ENCODE measurements at regions of chr6 and their contacts with region 1.

Region 1: GRCh38 chr6:166097915-166098522 is 69.6 kb downstream of the TBXT start:
- DNase-seq: peak; percentile 67
- CTCF ChIP-seq: peak; percentile 83

Region 2: DNA sequence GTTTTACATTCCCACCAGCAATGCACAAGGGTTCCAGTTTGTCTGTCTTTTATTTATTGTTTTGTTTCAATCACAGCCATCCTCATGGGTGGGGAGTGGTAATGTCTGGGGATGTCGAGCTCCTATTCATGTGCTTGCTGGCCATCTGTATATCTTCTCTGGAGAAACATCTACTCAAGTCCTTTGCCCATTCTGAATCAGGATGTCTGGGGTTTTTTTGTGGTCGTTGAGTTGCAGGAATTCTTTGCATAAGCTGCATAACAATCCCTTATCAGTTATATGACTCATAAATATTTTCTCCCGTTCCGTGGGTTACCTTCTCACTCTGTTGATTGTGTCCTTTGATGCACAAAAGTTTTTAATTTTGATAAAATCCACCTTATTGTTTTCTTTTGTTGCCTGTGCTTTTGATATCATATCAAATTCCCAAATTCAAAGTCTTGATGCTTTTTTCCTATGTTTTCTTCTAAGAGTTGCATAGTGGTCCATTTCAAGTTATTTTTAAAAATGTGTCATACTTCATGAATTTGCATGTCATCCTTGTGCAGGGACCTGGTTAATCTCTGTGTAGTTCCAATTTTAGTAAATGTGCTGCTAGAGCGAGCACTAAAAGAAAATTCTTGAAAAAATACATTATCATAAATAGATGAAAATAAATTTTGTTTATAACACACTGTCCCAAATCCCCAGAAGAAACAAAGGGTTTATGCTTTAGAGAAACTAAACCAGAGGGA is 380.1 kb before region 1 on chr6:
- CTCF ChIA-PET with region 1: no interaction called
- POLR2A ChIA-PET with region 1: no interaction called
- DNase-seq: no peak
- CTCF ChIP-seq: no peak

Region 3: DNA sequence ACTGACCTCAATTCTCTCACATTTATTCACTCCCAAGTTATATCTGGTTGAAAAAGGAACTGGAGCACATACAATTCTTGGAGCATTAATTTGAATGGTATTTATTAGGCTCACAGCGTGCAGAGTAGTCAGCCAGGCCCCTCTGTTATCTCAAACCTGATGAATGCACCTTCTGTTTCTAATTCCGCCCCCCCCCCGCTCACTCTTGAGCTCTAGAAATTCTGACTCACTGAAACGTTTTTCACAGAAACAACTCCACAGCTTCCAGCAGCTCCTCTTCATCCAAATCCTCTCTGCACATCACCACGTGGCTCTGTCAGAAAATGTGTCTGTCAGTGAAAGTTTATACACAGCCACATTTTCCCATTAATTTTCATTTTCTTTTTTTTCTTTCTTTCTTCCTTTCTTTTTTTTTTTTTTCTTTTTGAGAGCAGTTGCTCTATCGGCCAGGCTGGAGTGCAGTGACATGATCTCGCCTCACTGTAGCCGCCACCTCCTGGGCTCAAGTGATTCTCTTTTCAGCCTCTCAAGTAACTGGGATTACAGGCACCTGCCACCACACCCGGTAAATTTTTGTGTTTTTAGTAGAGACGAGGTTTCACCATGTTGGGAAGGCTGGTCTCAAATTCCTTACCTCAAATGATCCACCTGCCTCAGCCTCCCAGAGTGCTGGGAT is 39.8 kb before region 1 on chr6:
- CTCF ChIA-PET with region 1: no interaction called
- POLR2A ChIA-PET with region 1: no interaction called
- DNase-seq: no peak
- CTCF ChIP-seq: no peak

Region 4: GRCh38 chr6:166087246-166087645 is 10.8 kb before region 1 on chr6:
- CTCF ChIA-PET with region 1: interaction called, 14 read pairs
- POLR2A ChIA-PET with region 1: no interaction called
- DNase-seq: no peak
- CTCF ChIP-seq: no peak

Measured in GM10248 (cell line).